Transverse colon (tissue), 4 donors: ENCODE measurements at regions of chr1 and their contacts with region 1.

Region 1: GRCh38 chr1:178818416-178818815 is 52.5 kb downstream of the ANGPTL1 start:
- DNase-seq: no peak
- H3K4me3 ChIP-seq: no peak overlapping the region
- H3K27ac ChIP-seq: no peak overlapping the region
- H3K4me1 ChIP-seq: no peaks in the 10 kb centered on the region
- H3K27me3 ChIP-seq: no peaks in the 10 kb centered on the region
- CTCF ChIP-seq: no peak
- EP300 ChIP-seq: no peak
- POLR2A ChIP-seq: no peak

Region 2: GRCh38 chr1:178273707-178274410 is 544.6 kb before region 1 on chr1:
- in situ Hi-C with region 1: no loop called
- intact Hi-C with region 1: no loop called
- DNase-seq: no peak
- H3K4me3 ChIP-seq: no peak overlapping the region
- H3K27ac ChIP-seq: no peak overlapping the region
- H3K4me1 ChIP-seq: peaks cover 0 to 11% (median 2%) of the 10 kb centered on the region in 4 donors
- H3K27me3 ChIP-seq: no peaks in the 10 kb centered on the region
- CTCF ChIP-seq: no peak
- EP300 ChIP-seq: no peak
- POLR2A ChIP-seq: no peak

Region 3: GRCh38 chr1:178908358-178908757 is 89.9 kb after region 1 on chr1:
- in situ Hi-C with region 1: loop called in 1 of 4 experiments (anchors 25 kb)
- intact Hi-C with region 1: no loop called
- DNase-seq: no peak
- H3K4me3 ChIP-seq: no peak overlapping the region
- H3K27ac ChIP-seq: no peak overlapping the region
- H3K4me1 ChIP-seq: no peaks in the 10 kb centered on the region
- H3K27me3 ChIP-seq: no peaks in the 10 kb centered on the region
- CTCF ChIP-seq: no peak
- EP300 ChIP-seq: no peak
- POLR2A ChIP-seq: no peak